Naive thymus-derived CD4-positive, alpha-beta T cell (primary cell): ENCODE measurements at regions of chr7 and their contacts with region 1.

Region 1: GRCh38 chr7:32942786-32943653 is 14.2 kb upstream of the FKBP9 start:
- DNase-seq: peak; percentile 41 to 80 (median 60)
- ATAC-seq: peak; percentile 94
- H3K4me3 ChIP-seq: peak overlapping the region; percentile 66
- H3K4me3 Mint-ChIP-seq: peak overlapping the region; percentile 61 to 97 (median 87)
- H3K27ac ChIP-seq: peak overlapping the region; percentile 47
- H3K27ac Mint-ChIP-seq: peak overlapping the region in 1 of 9 donors; percentile 58
- H3K4me1 ChIP-seq: peaks cover 0 to 13% of the 10 kb centered on the region in 2 donors
- H3K4me1 Mint-ChIP-seq: peaks cover 7 to 27% (median 11%) of the 10 kb centered on the region in 7 donors
- H3K27me3 ChIP-seq: no peaks in the 10 kb centered on the region
- H3K27me3 Mint-ChIP-seq: peaks cover 0 to 10% (median 0%) of the 10 kb centered on the region in 5 donors

Region 2: GRCh38 chr7:32119790-32120196 is 823.2 kb before region 1 on chr7:
- CTCF ChIA-PET with region 1: no interaction called
- POLR2A ChIA-PET with region 1: no interaction called
- intact Hi-C with region 1: no loop called
- DNase-seq: no peak
- ATAC-seq: no peak
- H3K4me3 ChIP-seq: no peak overlapping the region
- H3K4me3 Mint-ChIP-seq: no peak overlapping the region
- H3K27ac ChIP-seq: no peak overlapping the region
- H3K27ac Mint-ChIP-seq: no peak overlapping the region
- H3K4me1 ChIP-seq: no peaks in the 10 kb centered on the region
- H3K4me1 Mint-ChIP-seq: no peaks in the 10 kb centered on the region
- H3K27me3 ChIP-seq: no peaks in the 10 kb centered on the region
- H3K27me3 Mint-ChIP-seq: no peaks in the 10 kb centered on the region

Region 3: DNA sequence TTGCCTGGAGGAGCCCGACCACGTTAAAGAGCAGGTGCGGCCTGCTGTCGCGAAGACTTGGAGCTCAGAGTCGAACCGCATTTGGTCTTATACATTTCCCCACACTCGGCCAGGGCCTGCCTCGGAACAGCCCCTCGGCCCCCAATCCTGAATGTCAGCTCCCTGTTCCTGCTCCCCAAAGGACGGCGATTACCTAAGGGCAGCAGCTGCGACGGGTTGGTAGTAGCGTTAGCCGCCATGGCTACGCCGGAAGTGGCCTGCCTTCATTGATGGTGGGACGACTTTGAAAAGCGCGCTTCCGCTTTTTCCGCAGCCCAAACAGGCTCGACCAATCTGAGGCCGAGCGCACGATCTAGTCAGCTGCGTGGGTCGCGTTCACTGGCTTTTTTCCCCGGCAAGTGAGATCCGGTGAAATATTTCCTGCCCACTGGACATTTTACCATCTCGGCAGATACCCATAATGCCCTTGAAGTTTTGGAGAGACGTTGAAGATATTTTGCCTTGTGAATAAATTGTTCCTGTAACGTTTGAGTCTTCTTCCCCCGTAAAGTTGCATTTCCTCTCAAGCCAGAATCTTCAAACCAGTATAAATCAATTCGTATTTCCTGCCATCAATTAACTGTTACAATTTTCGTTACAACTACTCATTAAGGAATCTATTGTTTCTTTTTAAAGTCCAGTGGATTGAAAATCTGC is 452.7 kb before region 1 on chr7 and contains the start of gene LSM5:
- CTCF ChIA-PET with region 1: no interaction called
- POLR2A ChIA-PET with region 1: no interaction called
- intact Hi-C with region 1: loop called (anchors 1 to 2 kb)
- DNase-seq: peak; percentile 77 to 91 (median 89)
- ATAC-seq: peak; percentile 84
- H3K4me3 ChIP-seq: peak within 1 kb of the TSS; percentile 86
- H3K4me3 Mint-ChIP-seq: peak within 1 kb of the TSS; percentile 83 to 98 (median 92)
- H3K27ac ChIP-seq: peak within 1 kb of the TSS; percentile 87
- H3K27ac Mint-ChIP-seq: peak within 1 kb of the TSS; percentile 90 to 98 (median 96)
- H3K4me1 ChIP-seq: peaks cover 8 to 13% of the 10 kb centered on the region in 2 donors
- H3K4me1 Mint-ChIP-seq: peaks cover 12 to 43% (median 31%) of the 10 kb centered on the region in 7 donors
- H3K27me3 ChIP-seq: no peaks in the 10 kb centered on the region
- H3K27me3 Mint-ChIP-seq: no peaks in the 10 kb centered on the region
- total RNA-seq, gene LSM5: 21.5 to 58.8 (median 39.4) TPM

Region 4: GRCh38 chr7:32639122-32639521 is 303.9 kb before region 1 on chr7:
- CTCF ChIA-PET with region 1: no interaction called
- POLR2A ChIA-PET with region 1: no interaction called
- intact Hi-C with region 1: no loop called
- DNase-seq: no peak
- ATAC-seq: no peak
- H3K4me3 ChIP-seq: no peak overlapping the region
- H3K4me3 Mint-ChIP-seq: no peak overlapping the region
- H3K27ac ChIP-seq: no peak overlapping the region
- H3K27ac Mint-ChIP-seq: no peak overlapping the region
- H3K4me1 ChIP-seq: no peaks in the 10 kb centered on the region
- H3K4me1 Mint-ChIP-seq: peaks cover 0 to 15% (median 3%) of the 10 kb centered on the region in 7 donors
- H3K27me3 ChIP-seq: no peaks in the 10 kb centered on the region
- H3K27me3 Mint-ChIP-seq: peaks cover 0 to 9% (median 3%) of the 10 kb centered on the region in 5 donors

Region 5: DNA sequence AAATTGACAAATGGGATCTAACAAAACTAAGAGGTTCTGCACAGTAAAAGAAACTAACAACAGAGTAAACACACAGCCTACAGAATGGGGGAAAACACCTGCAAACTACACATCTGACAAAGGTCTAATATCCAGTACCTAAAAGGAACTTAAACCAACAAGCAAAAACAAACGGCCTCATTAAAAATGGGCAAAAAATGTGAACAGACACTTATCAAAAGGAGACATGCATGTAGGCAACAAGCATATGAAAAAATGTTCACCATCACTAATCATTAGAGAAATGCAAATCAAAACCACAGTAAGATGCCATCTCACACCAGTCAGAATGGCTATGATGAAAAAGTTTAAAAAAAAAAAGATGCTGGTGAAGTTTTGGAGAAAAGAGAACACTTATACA is 248.8 kb before region 1 on chr7:
- CTCF ChIA-PET with region 1: no interaction called
- POLR2A ChIA-PET with region 1: no interaction called
- intact Hi-C with region 1: loop called in 1 of 2 experiments (anchors 2 kb)
- DNase-seq: no peak
- ATAC-seq: no peak
- H3K4me3 ChIP-seq: no peak overlapping the region
- H3K4me3 Mint-ChIP-seq: no peak overlapping the region
- H3K27ac ChIP-seq: no peak overlapping the region
- H3K27ac Mint-ChIP-seq: no peak overlapping the region
- H3K4me1 ChIP-seq: no peaks in the 10 kb centered on the region
- H3K4me1 Mint-ChIP-seq: peaks cover under 1 to 11% (median 6%) of the 10 kb centered on the region in 7 donors
- H3K27me3 ChIP-seq: no peaks in the 10 kb centered on the region
- H3K27me3 Mint-ChIP-seq: peaks cover 0 to 10% (median 0%) of the 10 kb centered on the region in 5 donors

Region 6: DNA sequence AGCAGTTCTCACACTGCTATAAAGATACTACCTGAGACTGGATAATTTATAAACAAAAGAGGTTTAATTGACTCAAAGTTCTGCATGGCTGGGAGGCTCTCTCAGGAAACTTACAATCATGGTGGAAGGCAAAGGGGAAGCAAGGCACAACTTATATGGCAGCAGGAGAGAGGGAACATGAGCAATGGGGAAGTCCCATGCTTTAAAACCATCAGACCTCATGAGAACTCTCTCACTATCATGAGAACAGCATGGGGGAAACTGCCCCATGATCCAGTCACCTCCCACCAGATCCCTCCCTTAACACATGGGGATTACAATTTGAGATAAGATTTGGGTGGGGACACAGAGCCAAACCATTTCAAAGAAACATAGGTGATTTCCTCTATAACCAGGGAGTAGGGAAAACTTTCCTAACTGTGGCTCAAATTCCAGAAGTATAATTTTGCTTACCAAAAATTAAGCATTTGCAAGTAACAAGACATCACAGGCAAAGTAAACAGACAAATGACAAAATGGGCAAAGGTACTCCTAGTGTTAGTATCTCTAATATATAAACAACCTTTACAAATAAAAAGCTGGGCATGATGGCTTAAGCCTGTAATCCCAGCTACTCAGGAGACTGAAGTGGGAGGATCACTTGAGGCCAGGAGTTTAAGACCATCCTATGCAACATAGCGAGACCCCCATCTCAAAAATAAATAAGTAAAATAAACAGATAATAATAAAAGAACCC is 139.4 kb before region 1 on chr7:
- CTCF ChIA-PET with region 1: interaction called, 4 read pairs
- POLR2A ChIA-PET with region 1: interaction called, 4 read pairs
- intact Hi-C with region 1: loop called (anchors 1 kb)
- DNase-seq: no peak
- ATAC-seq: no peak
- H3K4me3 ChIP-seq: no peak overlapping the region
- H3K4me3 Mint-ChIP-seq: no peak overlapping the region
- H3K27ac ChIP-seq: no peak overlapping the region
- H3K27ac Mint-ChIP-seq: no peak overlapping the region
- H3K4me1 ChIP-seq: no peaks in the 10 kb centered on the region
- H3K4me1 Mint-ChIP-seq: peaks cover 0 to 3% (median 0%) of the 10 kb centered on the region in 7 donors
- H3K27me3 ChIP-seq: no peaks in the 10 kb centered on the region
- H3K27me3 Mint-ChIP-seq: peaks cover 0 to 8% (median 3%) of the 10 kb centered on the region in 5 donors

Region 7: GRCh38 chr7:32905175-32905662 is 37.8 kb before region 1 on chr7:
- CTCF ChIA-PET with region 1: interaction called, 3 read pairs
- POLR2A ChIA-PET with region 1: no interaction called
- intact Hi-C with region 1: loop called (anchors 1 kb)
- DNase-seq: peak; percentile 37 to 88 (median 82)
- ATAC-seq: peak; percentile 92
- H3K4me3 ChIP-seq: peak overlapping the region; percentile 63
- H3K4me3 Mint-ChIP-seq: peak overlapping the region; percentile 73 to 89 (median 85)
- H3K27ac ChIP-seq: peak overlapping the region; percentile 84
- H3K27ac Mint-ChIP-seq: peak overlapping the region; percentile 86 to 96 (median 94)
- H3K4me1 ChIP-seq: peaks cover 6 to 16% of the 10 kb centered on the region in 2 donors
- H3K4me1 Mint-ChIP-seq: peaks cover 4 to 27% (median 24%) of the 10 kb centered on the region in 7 donors
- H3K27me3 ChIP-seq: no peaks in the 10 kb centered on the region
- H3K27me3 Mint-ChIP-seq: no peaks in the 10 kb centered on the region

Region 8: DNA sequence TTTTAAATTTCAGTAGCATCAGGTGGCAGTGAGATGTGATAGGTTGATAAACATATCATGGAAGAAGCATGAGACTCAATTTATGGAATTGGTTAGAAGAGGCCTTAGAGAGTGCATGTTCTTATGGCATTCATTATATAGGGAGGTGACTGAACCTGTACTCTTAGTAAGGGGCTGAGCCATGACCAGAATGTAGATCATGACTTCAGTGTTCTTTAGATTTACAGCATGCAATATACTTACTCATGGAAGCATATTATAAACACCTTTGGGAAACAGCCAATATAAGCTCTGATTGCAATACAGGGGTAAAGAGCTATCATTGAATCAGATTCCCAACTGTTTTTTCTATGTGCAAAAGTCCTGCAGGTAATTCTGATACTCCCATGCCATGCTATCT is 69.3 kb after region 1 on chr7:
- CTCF ChIA-PET with region 1: no interaction called
- POLR2A ChIA-PET with region 1: no interaction called
- intact Hi-C with region 1: no loop called
- DNase-seq: no peak
- ATAC-seq: no peak
- H3K4me3 ChIP-seq: no peak overlapping the region
- H3K4me3 Mint-ChIP-seq: no peak overlapping the region
- H3K27ac ChIP-seq: no peak overlapping the region
- H3K27ac Mint-ChIP-seq: no peak overlapping the region
- H3K4me1 ChIP-seq: no peaks in the 10 kb centered on the region
- H3K4me1 Mint-ChIP-seq: peaks cover 0 to 9% (median 0%) of the 10 kb centered on the region in 7 donors
- H3K27me3 ChIP-seq: no peaks in the 10 kb centered on the region
- H3K27me3 Mint-ChIP-seq: no peaks in the 10 kb centered on the region

Region 9: GRCh38 chr7:33128990-33129805 is 186.2 kb after region 1 on chr7 and contains the start of gene BBS9:
- CTCF ChIA-PET with region 1: no interaction called
- POLR2A ChIA-PET with region 1: no interaction called
- intact Hi-C with region 1: loop called in 1 of 2 experiments (anchors 1 kb)
- DNase-seq: peak; percentile 83 to 90 (median 88)
- ATAC-seq: peak; percentile 97
- H3K4me3 ChIP-seq: peak within 1 kb of the TSS; percentile 80
- H3K4me3 Mint-ChIP-seq: peak within 1 kb of the TSS; percentile 94 to 99 (median 97)
- H3K27ac ChIP-seq: peak within 1 kb of the TSS; percentile 78
- H3K27ac Mint-ChIP-seq: peak within 1 kb of the TSS; percentile 84 to 97 (median 91)
- H3K4me1 ChIP-seq: peaks cover 6 to 9% of the 10 kb centered on the region in 2 donors
- H3K4me1 Mint-ChIP-seq: peaks cover 13 to 36% (median 25%) of the 10 kb centered on the region in 7 donors
- H3K27me3 ChIP-seq: no peaks in the 10 kb centered on the region
- H3K27me3 Mint-ChIP-seq: peaks cover 0 to 18% (median 0%) of the 10 kb centered on the region in 5 donors
- total RNA-seq, gene BBS9: 11.7 to 31.0 (median 28.3) TPM